ENCODE measurements at regions of chr3 and their contacts with region 1.

Region 1: GRCh38 chr3:40580494-40581091 is 55.8 kb downstream of the ZNF621 start:
- DNase-seq: peak; percentile 64
- H3K4me3 ChIP-seq: no peak overlapping the region
- H3K27ac ChIP-seq: no peak overlapping the region
- H3K4me1 ChIP-seq: no peaks in the 10 kb centered on the region
- H3K27me3 ChIP-seq: no peaks in the 10 kb centered on the region
- CTCF ChIP-seq: peak; percentile 75

Region 2: GRCh38 chr3:40452876-40453730 is 127.5 kb before region 1 on chr3:
- CTCF ChIA-PET with region 1: no interaction called
- POLR2A ChIA-PET with region 1: no interaction called
- intact Hi-C with region 1: no loop called
- DNase-seq: peak; percentile 96
- H3K4me3 ChIP-seq: peak overlapping the region; percentile 59
- H3K27ac ChIP-seq: peak overlapping the region; percentile 70
- H3K4me1 ChIP-seq: peaks cover 4% of the 10 kb centered on the region
- H3K27me3 ChIP-seq: no peaks in the 10 kb centered on the region
- CTCF ChIP-seq: no peak

Region 3: GRCh38 chr3:40690749-40691451 is 110.3 kb after region 1 on chr3:
- CTCF ChIA-PET with region 1: no interaction called
- POLR2A ChIA-PET with region 1: no interaction called
- intact Hi-C with region 1: no loop called
- DNase-seq: no peak
- H3K4me3 ChIP-seq: no peak overlapping the region
- H3K27ac ChIP-seq: no peak overlapping the region
- H3K4me1 ChIP-seq: no peaks in the 10 kb centered on the region
- H3K27me3 ChIP-seq: no peaks in the 10 kb centered on the region
- CTCF ChIP-seq: no peak

Region 4: GRCh38 chr3:40920041-40920440 is 339.4 kb after region 1 on chr3:
- CTCF ChIA-PET with region 1: no interaction called
- POLR2A ChIA-PET with region 1: no interaction called
- intact Hi-C with region 1: loop called (anchors 10 kb)
- DNase-seq: no peak
- H3K4me3 ChIP-seq: no peak overlapping the region
- H3K27ac ChIP-seq: no peak overlapping the region
- H3K4me1 ChIP-seq: no peaks in the 10 kb centered on the region
- H3K27me3 ChIP-seq: no peaks in the 10 kb centered on the region
- CTCF ChIP-seq: no peak

Region 5: DNA sequence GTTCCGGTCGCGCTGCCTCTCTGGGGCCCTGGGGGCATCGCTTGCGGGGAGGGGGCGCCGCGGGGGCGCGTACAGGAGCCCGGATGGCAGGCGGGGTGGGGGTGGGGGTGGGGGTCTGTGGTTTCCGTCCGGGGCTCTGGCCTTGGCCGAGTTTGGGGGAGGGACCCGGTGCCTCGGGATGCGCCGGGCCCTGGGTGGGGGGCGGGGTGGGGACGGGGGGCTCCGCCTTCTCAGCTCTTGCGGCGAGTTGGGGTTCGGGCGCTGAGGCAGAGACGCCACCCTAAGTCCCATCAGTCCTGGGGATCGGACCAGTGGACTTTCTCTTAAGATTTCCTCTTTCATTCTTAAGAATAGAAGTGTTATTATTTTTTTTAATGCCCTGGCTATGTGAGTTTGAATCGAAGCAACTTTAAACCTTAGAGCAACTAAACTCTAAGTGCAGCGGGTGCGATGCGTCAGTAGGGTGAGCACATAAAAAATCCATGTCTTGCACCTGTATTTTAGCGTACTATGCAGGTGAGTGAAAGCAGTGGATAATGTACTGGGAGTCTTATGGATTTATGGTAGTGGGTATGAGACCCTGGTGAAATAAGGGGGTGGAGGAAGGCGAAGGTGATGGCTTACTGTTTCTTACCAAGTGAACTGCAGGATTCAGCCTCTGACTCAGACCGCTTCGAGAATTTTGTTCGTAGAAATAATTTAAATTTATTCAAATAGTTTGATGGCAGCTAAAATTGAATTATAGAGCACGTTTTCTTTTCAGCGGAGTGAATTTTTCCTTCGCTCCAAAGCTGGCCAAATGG is 619.5 kb after region 1 on chr3:
- CTCF ChIA-PET with region 1: no interaction called
- POLR2A ChIA-PET with region 1: no interaction called
- intact Hi-C with region 1: loop called (anchors 5 kb)
- DNase-seq: no peak
- H3K4me3 ChIP-seq: peak overlapping the region; percentile 75
- H3K27ac ChIP-seq: peak overlapping the region; percentile 88
- H3K4me1 ChIP-seq: peaks cover 6% of the 10 kb centered on the region
- H3K27me3 ChIP-seq: peaks cover 8% of the 10 kb centered on the region
- CTCF ChIP-seq: no peak

Region 6: DNA sequence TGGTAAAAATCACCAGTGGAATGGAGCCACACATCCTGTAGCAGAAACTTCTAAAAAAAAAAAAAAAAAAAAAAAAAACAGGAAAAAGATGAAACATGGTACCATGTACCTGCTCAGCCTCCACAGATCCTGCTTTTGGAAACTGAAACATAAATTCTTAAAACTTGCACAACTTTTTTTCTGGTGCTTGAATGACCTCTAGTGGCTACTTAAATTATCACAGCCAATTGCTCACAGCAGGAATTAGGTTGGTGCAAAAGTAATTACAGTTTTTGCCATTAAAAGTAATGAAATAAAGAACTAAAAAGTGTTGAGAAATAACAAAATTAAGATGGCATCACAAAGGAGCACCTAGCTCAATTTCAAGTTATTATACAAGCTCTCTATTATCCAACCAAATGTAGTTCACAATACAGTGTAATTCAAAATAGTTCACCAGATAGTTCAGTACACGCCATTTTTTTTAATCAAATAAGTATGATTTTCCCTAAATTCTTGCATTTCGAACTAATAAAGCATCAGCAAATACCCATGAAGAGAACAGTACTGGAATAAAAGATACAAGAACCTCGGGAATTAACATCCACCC is 1300.7 kb after region 1 on chr3:
- CTCF ChIA-PET with region 1: no interaction called
- POLR2A ChIA-PET with region 1: no interaction called
- intact Hi-C with region 1: loop called (anchors 2 kb)
- DNase-seq: peak; percentile 28
- H3K4me3 ChIP-seq: no peak overlapping the region
- H3K27ac ChIP-seq: no peak overlapping the region
- H3K4me1 ChIP-seq: no peaks in the 10 kb centered on the region
- H3K27me3 ChIP-seq: no peaks in the 10 kb centered on the region
- CTCF ChIP-seq: peak; percentile 56